Esophagus squamous epithelium (tissue), 5 donors: ENCODE measurements at regions of chr3 and their contacts with region 1.

Region 1: DNA sequence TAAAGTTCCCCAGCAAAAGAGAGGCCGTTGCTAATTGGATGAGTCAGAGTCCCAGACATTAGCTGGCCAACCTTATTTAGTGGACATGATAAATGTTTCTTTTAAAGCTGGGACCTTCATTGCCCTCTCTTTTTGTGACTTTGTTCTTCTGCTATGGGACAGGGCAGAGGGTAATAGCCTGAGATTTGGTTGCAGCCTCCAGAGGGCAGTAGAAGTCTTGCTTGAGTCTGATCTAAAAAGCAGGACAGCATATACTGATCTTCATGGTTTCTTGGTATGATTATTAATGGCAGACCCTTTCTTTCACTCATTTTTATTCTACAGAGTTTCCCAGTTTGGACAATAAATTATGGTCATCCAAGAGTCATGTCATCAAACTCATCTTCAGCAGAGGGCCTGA is 25.1 kb upstream of the ZKSCAN7 start:
- DNase-seq: no peak
- H3K4me3 ChIP-seq: no peak overlapping the region
- H3K27ac ChIP-seq: no peak overlapping the region
- H3K4me1 ChIP-seq: peaks cover 0 to 7% (median 0%) of the 10 kb centered on the region in 3 donors
- H3K27me3 ChIP-seq: peaks cover 0 to 51% (median 0%) of the 10 kb centered on the region in 4 donors
- CTCF ChIP-seq: peak in 1 of 6 experiments; percentile 30
- POLR2A ChIP-seq: no peak

Region 2: GRCh38 chr3:44323341-44323955 is 206.5 kb before region 1 on chr3:
- intact Hi-C with region 1: loop called (anchors 10 kb)
- DNase-seq: no peak
- H3K4me3 ChIP-seq: no peak overlapping the region
- H3K27ac ChIP-seq: no peak overlapping the region
- H3K4me1 ChIP-seq: no peaks in the 10 kb centered on the region
- H3K27me3 ChIP-seq: peaks cover 0 to 11% (median 0%) of the 10 kb centered on the region in 4 donors
- CTCF ChIP-seq: peak; percentile 58 to 85 (median 76)
- POLR2A ChIP-seq: no peak

Region 3: GRCh38 chr3:44338010-44338827 is 191.7 kb before region 1 on chr3 and contains the start of gene TCAIM:
- intact Hi-C with region 1: no loop called
- DNase-seq: peak; percentile 82
- H3K4me3 ChIP-seq: peak within 1 kb of the TSS; percentile 57 to 91 (median 72)
- H3K27ac ChIP-seq: peak within 1 kb of the TSS; percentile 93 to 99 (median 98)
- H3K4me1 ChIP-seq: peaks cover 0 to 40% (median 4%) of the 10 kb centered on the region in 3 donors
- H3K27me3 ChIP-seq: peaks cover 0 to 9% (median 0%) of the 10 kb centered on the region in 4 donors
- CTCF ChIP-seq: no peak
- POLR2A ChIP-seq: peak in 3 of 4 donors; percentile 73 to 86 (median 84)
- total RNA-seq, gene TCAIM: 15.6 to 25.0 (median 22.6) TPM

Region 4: GRCh38 chr3:44913868-44914468 is 384.0 kb after region 1 on chr3:
- intact Hi-C with region 1: loop called (anchors 5 kb)
- DNase-seq: no peak
- H3K4me3 ChIP-seq: no peak overlapping the region
- H3K27ac ChIP-seq: no peak overlapping the region
- H3K4me1 ChIP-seq: peaks cover 0 to 7% (median 0%) of the 10 kb centered on the region in 3 donors
- H3K27me3 ChIP-seq: peaks cover 0 to 12% (median 2%) of the 10 kb centered on the region in 4 donors
- CTCF ChIP-seq: peak; percentile 35 to 85 (median 76)
- POLR2A ChIP-seq: no peak